GM12878 (cell line): ENCODE measurements at regions of chr6 and their contacts with region 1.

Region 1: DNA sequence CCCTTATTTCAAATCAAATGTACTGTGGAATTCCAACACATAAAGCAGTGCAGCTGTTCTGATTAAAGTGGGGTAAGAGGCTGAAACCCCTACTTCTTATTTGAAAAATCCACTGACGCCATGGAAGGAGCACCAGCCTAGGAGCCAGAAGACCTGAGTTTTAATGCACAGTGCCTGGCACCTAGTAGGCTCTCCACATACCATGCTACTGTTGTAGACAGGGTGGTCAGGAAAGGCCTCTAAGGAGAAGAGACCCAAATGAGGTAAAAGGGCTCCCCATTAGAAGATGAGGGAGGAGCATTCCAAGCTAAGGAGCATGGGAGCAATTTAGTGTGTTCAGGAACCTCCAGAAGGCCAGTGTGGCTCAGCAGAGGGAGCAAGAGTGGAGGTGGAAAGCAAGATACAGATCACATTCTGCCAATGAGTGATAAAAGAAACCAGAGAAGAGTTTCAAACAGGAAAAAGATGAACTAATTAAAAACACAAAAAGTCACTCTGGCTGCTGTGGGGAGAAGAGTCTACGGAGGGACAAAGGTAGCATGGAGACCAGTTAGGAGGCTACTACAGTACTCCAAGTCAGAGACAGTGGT is 11.8 kb upstream of the ZNF76 start:
- DNase-seq: peak; percentile 31
- ATAC-seq: peak; percentile 80
- H3K4me3 ChIP-seq: peak overlapping the region; percentile 54; the same call in 1 of the 2 replicates
- H3K27ac ChIP-seq: peak overlapping the region; percentile 75
- H3K4me1 ChIP-seq: peaks cover 29% of the 10 kb centered on the region
- H3K27me3 ChIP-seq: no peaks in the 10 kb centered on the region
- CTCF ChIP-seq: peak in 2 of 3 experiments; percentile 9 to 22; a peak in 2 of 6 replicates
- EP300 ChIP-seq: no peak
- POLR2A ChIP-seq: no peak
- RAD21 ChIP-seq: no peak

Region 2: DNA sequence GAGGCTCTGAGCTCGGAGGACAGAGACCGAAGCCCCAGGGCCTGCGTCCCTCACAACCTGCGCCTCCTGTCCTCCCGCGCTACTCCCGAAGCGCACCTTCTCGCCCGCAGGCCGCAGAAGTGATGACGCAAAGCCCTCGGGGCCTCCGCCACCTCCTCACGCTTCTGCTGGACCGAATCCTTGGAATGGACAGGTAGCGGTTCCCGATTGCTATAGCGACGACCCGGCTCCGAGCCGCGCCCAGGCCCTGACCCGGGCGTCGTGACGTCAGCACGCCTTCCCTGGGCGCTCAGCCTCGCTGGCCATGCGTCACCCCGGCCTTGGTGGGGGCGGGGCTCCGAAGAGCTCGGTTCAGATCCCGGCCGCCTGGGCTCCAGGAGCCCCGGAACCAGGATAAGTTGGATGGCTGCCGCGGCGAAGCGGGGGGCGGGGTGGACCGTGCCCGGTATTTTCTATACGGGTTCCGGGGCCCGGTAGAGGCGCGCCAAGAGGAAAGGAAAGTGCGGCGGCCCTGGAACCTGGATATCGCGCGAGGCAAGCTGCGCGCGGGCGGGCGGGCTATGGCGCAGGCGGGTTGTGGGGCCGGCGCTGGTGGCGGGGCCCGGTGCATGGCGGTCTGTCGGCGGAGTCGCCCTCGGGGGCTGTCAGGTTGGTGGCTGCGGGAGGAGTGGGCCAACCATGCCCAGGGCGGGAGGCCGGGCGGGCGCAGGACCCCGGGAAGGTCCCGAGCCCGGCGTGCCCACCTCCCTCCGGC is 11.6 kb after region 1 on chr6 and contains the start of gene ZNF76:
- CTCF ChIA-PET with region 1: interaction called, 52 read pairs
- POLR2A ChIA-PET with region 1: interaction called, 10 read pairs
- RAD21 ChIA-PET with region 1: interaction called, 3 read pairs
- SMC1A ChIA-PET with region 1: interaction called, 3 read pairs
- in situ Hi-C with region 1: no loop called
- intact Hi-C with region 1: no loop called
- DNase-seq: peak; percentile 63
- ATAC-seq: peak; percentile 90
- H3K4me3 ChIP-seq: peak within 1 kb of the TSS; percentile 70
- H3K27ac ChIP-seq: peak within 1 kb of the TSS; percentile 85
- H3K4me1 ChIP-seq: no peaks in the 10 kb centered on the region; the same call in 1 of the 2 replicates
- H3K27me3 ChIP-seq: no peaks in the 10 kb centered on the region
- CTCF ChIP-seq: no peak
- EP300 ChIP-seq: peak in 1 of 2 experiments; percentile 50; a peak in 2 of 4 replicates
- POLR2A ChIP-seq: peak; percentile 89
- RAD21 ChIP-seq: no peak
- polyA plus RNA-seq, gene ZNF76: 2.8 to 3.1 TPM